ENCODE measurements at regions of chr3 and their contacts with region 1.

Region 1: GRCh38 chr3:105518806-105519418 is 152.2 kb downstream of the ALCAM start:
- DNase-seq: no peak
- ATAC-seq: peak in 3 of 4 donors; percentile 50 to 58 (median 55)
- H3K4me3 ChIP-seq: no peak overlapping the region
- H3K27ac ChIP-seq: no peak overlapping the region
- H3K4me1 ChIP-seq: no peaks in the 10 kb centered on the region
- H3K27me3 ChIP-seq: no peaks in the 10 kb centered on the region
- CTCF ChIP-seq: peak; percentile 40 to 78 (median 62)
- POLR2A ChIP-seq: no peak

Region 2: DNA sequence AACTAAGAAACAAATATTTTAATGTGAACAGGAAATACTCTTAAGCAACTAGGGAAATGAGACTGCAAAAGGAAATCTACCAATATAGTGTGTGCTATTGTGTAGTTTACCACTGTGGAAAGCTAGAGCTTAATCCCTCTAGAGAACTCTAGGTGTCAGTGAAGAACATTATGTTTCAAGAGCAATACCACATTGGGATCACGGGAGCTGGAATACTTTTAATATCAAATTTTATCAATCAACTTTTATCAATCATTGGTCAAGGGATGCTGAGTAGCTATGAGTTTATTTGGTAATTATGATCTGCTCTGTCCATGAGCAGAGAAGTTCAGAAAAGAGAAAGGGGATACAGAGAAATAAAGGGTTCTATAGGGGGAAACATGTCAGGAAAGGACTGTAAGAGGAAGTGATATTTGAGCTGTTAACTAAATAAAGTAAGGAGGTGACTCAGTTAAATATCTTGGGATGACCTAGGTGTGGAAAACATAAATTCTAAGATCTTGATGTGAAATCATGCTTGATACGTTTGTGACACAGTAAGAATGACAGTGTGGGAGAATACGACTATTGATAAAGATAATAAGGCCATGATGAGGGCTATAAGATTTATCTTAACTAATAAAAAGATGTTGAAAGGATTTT is 914.4 kb before region 1 on chr3:
- intact Hi-C with region 1: loop called in 1 of 10 experiments (anchors 5 kb)
- DNase-seq: no peak
- ATAC-seq: no peak
- H3K4me3 ChIP-seq: no peak overlapping the region
- H3K27ac ChIP-seq: no peak overlapping the region
- H3K4me1 ChIP-seq: no peaks in the 10 kb centered on the region
- H3K27me3 ChIP-seq: no peaks in the 10 kb centered on the region
- CTCF ChIP-seq: peak in 1 of 12 donors; percentile 17
- POLR2A ChIP-seq: no peak

Region 3: DNA sequence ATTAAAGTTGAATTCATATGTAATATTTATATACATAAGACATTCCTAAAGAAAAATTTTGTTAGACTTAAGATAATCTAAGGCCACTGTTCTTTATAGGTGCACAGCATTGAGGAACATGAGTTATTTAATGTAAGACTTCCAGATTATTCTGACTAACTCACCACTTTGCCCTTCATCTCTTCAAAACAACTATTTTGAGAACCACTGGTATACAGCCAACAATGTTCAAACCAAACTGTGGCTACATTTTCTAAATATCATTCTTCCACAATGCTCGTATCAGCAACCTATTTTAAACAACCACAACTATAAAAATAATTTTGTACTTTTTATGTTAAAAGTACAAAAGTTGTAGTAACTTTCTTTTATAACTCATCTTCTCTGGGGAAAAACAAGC is 352.0 kb before region 1 on chr3:
- intact Hi-C with region 1: loop called in 1 of 10 experiments (anchors 10 kb)
- DNase-seq: no peak
- ATAC-seq: no peak
- H3K4me3 ChIP-seq: no peak overlapping the region
- H3K27ac ChIP-seq: no peak overlapping the region
- H3K4me1 ChIP-seq: no peaks in the 10 kb centered on the region
- H3K27me3 ChIP-seq: no peaks in the 10 kb centered on the region
- CTCF ChIP-seq: no peak
- POLR2A ChIP-seq: no peak

Region 4: GRCh38 chr3:105366326-105367062 is 152.4 kb before region 1 on chr3 and contains the start of gene ALCAM:
- intact Hi-C with region 1: loop called in 1 of 10 experiments (anchors 2 kb)
- DNase-seq: peak; percentile 86 to 94 (median 90)
- ATAC-seq: peak; percentile 88 to 98 (median 96)
- H3K4me3 ChIP-seq: peak within 1 kb of the TSS; percentile 25 to 72 (median 62)
- H3K27ac ChIP-seq: peak within 1 kb of the TSS in 6 of 12 donors; percentile 17 to 73 (median 38)
- H3K4me1 ChIP-seq: peaks cover 0 to 43% (median 21%) of the 10 kb centered on the region in 12 donors
- H3K27me3 ChIP-seq: no peaks in the 10 kb centered on the region
- CTCF ChIP-seq: peak in 10 of 12 donors; percentile 15 to 59 (median 36)
- POLR2A ChIP-seq: no peak
- total RNA-seq, gene ALCAM: 2.3 to 19.9 (median 5.5) TPM

Measured in heart left ventricle (tissue), 16 donors.